ENCODE measurements at regions of chr9 and their contacts with region 1.

Region 1: DNA sequence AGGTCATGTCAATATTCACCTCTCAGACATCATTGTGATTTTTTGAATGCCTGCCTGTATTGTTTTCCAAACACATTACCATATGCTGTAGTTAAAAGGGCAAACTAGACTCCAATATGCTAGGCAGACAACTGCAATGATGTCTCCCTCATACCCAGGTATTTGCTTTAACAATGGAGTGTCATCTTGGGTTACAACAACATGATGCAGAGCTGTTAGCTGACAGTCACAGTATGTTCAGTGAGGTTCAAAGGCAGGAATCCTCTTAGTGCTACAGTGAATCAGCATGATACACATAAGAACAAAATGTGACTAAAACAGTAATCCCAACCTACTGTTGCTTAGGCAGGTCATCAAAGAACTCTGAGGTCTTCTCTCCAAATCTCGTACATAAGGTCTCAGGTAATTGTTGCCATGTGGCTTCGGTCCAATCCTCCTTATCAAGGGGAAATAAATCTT is 24.0 kb downstream of the OR1J1 start:
- DNase-seq: no peak
- ATAC-seq: no peak
- H3K4me3 Mint-ChIP-seq: no peak overlapping the region
- H3K27ac Mint-ChIP-seq: no peak overlapping the region
- H3K4me1 Mint-ChIP-seq: no peaks in the 10 kb centered on the region
- H3K27me3 Mint-ChIP-seq: peaks cover 11% of the 10 kb centered on the region

Region 2: GRCh38 chr9:122370869-122371755 is 82.6 kb before region 1 on chr9 and contains the start of gene PTGS1:
- CTCF ChIA-PET with region 1: no interaction called
- POLR2A ChIA-PET with region 1: no interaction called
- intact Hi-C with region 1: loop called in 1 of 2 experiments (anchors 5 kb)
- DNase-seq: peak; percentile 19
- ATAC-seq: peak; percentile 33
- H3K4me3 Mint-ChIP-seq: no peak within 1 kb of the TSS
- H3K27ac Mint-ChIP-seq: no peak within 1 kb of the TSS
- H3K4me1 Mint-ChIP-seq: peaks cover 9% of the 10 kb centered on the region
- H3K27me3 Mint-ChIP-seq: peaks cover 30% of the 10 kb centered on the region
- total RNA-seq, gene PTGS1: 0.09 TPM in 1 of 2 experiments, not detected in the other

Region 3: DNA sequence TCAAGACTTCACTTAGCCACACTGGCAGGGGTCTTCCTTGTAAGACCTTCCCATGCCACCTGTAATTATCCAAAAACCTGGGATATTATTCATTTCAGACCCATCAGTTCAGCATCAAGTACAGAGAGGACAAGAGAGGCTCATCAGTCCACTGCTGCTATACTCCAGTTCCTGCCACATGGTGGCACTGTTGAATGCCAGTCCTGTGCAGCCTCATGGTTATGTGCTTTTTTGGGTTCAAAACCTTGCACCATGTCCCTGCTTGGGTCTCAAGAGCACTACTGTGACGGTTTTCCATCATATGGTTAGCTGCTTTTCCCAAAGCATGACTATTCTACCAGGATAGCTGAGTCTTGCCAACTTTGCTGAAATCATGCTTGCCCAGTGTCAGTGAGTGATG is 74.4 kb before region 1 on chr9:
- CTCF ChIA-PET with region 1: no interaction called
- POLR2A ChIA-PET with region 1: no interaction called
- intact Hi-C with region 1: loop called (anchors 2 to 5 kb)
- DNase-seq: peak; percentile 53
- ATAC-seq: no peak
- H3K4me3 Mint-ChIP-seq: no peak overlapping the region
- H3K27ac Mint-ChIP-seq: no peak overlapping the region
- H3K4me1 Mint-ChIP-seq: no peaks in the 10 kb centered on the region
- H3K27me3 Mint-ChIP-seq: peaks cover 10% of the 10 kb centered on the region

Region 4: DNA sequence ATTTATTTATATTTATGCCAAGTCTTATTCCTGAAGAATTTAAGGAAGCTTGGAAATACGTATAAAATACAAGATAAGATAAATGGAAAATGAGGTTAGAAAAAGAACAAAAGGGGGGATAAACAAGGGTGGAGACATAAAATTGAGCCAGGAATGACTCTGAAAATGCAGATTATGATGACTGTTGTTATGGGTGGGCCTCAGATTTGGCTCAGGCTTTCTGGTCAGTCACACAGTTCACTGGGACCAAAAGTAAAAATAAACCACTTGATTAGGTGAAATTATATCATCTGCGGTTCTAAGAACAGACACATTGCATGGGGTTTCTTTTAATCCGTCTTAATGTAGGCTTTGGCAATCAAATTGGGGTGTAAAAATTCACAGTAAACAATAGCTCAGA is 27.0 kb before region 1 on chr9:
- CTCF ChIA-PET with region 1: no interaction called
- POLR2A ChIA-PET with region 1: no interaction called
- intact Hi-C with region 1: no loop called
- DNase-seq: no peak
- ATAC-seq: no peak
- H3K4me3 Mint-ChIP-seq: no peak overlapping the region
- H3K27ac Mint-ChIP-seq: no peak overlapping the region
- H3K4me1 Mint-ChIP-seq: no peaks in the 10 kb centered on the region
- H3K27me3 Mint-ChIP-seq: peaks cover 23% of the 10 kb centered on the region